Mammary epithelial cell (primary cell): ENCODE measurements at regions of chr7 and their contacts with region 1.

Region 1: DNA sequence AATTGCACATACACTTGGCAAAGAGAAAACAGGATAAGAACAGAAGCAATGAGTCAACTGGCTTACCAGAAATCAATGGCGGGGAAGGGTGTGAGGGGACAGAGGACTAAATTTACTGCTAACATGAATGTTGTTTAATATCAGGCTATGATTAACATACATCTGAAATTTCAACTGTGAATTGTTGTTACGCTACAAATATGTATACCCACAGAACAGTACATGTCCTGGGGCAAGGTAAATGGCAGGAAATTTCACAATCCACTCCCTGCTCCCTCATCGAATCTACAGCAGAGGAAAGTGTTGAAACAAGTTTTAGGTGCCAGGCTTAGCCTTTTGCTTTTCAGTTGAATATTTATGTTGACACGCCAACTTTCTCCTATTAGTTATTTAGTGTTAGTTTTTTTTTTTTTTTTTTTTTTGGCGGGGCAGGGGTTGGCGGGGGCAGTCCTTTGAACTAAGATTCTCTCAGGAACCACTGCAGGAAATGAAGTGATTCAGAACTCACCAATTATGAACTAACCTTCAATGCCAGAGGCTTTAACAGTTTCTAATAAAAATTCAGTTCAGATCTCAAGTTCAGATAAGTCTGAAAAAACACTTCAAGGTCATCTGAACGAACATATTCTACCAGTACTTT is 99.0 kb downstream of the UBE2H start:
- DNase-seq: peak; percentile 92
- H3K4me3 ChIP-seq: peak overlapping the region in 1 of 3 experiments; percentile 8
- H3K27ac ChIP-seq: peak overlapping the region; percentile 79
- H3K4me1 ChIP-seq: peaks cover 30% of the 10 kb centered on the region
- H3K27me3 ChIP-seq: no peaks in the 10 kb centered on the region
- CTCF ChIP-seq: no peak

Region 2: DNA sequence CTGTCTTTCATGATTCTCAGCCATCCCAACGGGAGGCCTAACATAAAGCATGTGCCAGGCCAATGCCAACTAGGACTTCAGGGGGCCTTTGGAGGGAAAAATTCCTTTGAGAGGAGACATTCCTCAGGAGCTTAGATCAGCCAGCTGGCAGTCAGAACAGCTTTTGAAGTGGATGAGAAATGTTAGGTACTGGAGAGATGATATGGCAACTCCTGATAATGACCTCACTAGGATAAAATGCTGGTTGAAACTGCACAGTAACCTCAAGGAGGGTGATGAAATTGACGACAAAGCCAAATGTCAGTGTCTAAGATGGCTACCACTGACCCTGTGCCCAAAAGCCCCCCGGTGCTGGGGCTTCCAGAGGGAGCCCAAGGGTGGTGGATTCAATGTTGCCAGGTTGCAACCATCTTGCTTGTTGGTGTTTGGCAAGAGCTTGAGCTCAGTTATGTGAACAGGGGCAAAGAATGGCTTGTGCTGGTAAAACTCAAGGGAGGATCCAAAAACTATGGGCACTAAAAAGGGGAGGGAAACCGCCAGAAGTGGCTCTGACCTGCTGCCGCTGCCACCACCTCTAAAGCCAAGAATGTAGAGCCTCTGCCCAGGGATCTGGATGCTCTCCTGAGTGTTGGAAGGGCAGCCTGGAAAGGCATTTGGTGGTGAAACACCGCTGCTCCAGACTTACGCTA is 22.2 kb before region 1 on chr7:
- CTCF ChIA-PET with region 1: no interaction called
- dilution Hi-C with region 1: no loop called
- in situ Hi-C with region 1: no loop called
- intact Hi-C with region 1: loop called (anchors 1 kb)
- DNase-seq: peak; percentile 89
- H3K4me3 ChIP-seq: no peak overlapping the region
- H3K27ac ChIP-seq: peak overlapping the region; percentile 77
- H3K4me1 ChIP-seq: peaks cover 30% of the 10 kb centered on the region
- H3K27me3 ChIP-seq: no peaks in the 10 kb centered on the region
- CTCF ChIP-seq: no peak

Region 3: DNA sequence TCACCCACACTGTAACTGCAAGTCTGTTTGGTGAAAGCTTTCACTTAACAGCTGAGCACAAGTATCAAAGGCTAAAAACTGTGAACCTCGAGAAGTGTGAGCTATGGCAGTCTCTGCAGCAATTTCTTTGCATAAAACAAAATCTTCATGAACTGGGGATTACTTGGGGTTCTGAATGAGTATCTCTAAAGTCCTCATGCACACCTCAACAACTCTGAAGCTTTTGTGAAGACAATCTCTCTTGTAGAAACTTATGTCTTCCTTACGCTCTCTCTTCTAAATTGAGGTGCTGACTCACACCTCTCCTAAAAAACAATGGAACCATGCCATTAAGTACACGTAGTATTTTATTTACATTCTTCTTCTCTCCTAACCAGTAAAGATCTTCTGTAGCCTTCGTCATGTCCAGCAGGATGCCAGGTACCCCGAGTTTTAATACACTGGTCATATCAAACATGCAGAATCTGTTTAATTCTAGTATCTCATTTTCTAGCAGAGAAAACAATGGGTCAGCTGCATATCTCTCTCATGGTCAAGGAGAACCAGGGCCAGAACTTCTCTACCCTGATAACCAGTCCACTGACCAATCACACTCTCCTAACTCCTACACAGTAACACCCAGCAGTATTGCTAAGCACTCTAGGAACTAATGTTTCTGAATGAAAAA is 22.1 kb after region 1 on chr7:
- CTCF ChIA-PET with region 1: no interaction called
- dilution Hi-C with region 1: no loop called
- in situ Hi-C with region 1: no loop called
- intact Hi-C with region 1: no loop called
- DNase-seq: peak; percentile 58
- H3K4me3 ChIP-seq: no peak overlapping the region
- H3K27ac ChIP-seq: peak overlapping the region; percentile 32
- H3K4me1 ChIP-seq: peaks cover 30% of the 10 kb centered on the region
- H3K27me3 ChIP-seq: no peaks in the 10 kb centered on the region
- CTCF ChIP-seq: no peak